Right lobe of liver (tissue), 6 donors: ENCODE measurements at regions of chr16 and their contacts with region 1.

Region 1: DNA sequence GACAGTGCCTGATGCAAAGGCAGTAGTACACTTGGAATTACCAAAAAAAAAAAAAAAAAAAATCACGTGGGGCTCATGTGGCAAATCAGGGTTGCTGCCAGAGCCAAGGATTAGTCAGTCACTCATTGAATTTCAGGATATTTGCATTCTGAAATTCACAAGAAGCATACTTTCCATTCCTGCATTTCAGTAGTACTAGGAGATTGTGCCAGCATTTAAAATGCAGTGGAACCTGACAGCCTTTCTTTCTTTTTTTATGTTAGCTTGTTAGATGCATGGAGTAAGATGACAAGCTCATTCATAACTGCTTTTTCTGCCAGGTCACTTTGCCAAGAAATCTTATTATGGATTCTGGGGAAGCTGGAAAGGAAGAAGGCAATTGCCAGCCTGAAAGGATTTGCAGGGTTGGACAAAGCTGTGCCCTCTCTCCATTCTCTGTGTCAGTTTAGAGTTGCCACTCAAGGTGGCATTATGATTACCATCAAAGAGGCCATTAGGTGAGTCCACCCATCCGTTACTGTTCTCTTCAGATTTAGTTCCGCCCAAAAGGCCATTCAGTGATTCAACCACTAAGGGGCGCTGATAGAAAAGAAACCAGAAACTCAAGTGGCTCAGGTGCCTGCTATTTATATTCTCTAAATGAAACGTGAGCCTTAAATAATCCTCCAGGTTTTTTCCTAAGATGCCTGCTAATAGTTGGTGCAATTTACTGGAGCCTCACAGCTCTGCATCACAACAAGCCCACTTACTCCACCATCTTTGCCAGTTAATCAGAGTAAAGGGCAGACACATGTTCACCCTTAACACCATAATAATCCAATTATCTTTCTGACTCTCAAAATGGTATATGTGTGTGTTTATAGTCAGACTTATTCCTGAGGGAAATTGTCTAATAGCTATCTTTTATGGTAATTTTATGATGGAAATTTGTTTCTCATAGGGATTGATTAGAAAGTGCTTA is 59.0 kb downstream of the TANGO6 start:
- DNase-seq: peak in 1 of 3 donors; percentile 57
- ATAC-seq: peak; percentile 72 to 77 (median 76)
- H3K4me3 ChIP-seq: no peak overlapping the region
- H3K27ac ChIP-seq: peak overlapping the region in 1 of 3 donors; percentile 76
- H3K4me1 ChIP-seq: peaks cover 0 to 42% (median 17%) of the 10 kb centered on the region in 4 donors
- H3K27me3 ChIP-seq: no peaks in the 10 kb centered on the region
- CTCF ChIP-seq: peak; percentile 69 to 82 (median 79)
- POLR2A ChIP-seq: no peak

Region 2: DNA sequence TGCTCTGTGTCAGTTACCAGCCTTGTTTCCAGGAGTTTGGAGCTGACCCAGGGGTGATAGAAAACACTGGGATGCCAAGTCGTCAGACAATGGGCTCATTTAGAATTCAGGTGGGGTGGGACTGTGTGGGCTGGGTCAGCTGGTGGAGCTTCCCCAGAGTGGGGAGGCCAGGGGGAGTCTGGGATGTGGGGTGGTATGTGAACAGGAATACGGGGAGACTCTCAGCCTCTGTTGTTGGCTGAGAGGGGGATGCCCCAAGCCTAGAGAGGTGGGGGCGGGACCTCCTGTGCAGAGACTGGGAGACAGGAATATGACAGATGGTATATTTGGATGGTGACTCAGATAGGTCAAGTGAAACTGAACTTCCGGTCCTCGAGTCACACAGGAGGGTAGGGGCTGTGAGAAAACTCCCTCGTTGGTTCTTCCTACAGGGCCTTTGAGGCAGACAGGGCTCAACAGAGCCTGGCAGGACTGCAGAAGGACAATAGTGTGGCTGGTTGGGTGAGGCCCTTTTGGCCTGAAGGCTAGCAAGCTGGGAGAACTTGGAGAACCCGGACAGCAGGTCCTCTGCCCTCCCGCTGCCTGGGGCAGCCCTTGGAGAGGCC is 141.5 kb before region 1 on chr16:
- intact Hi-C with region 1: no loop called
- DNase-seq: no peak
- ATAC-seq: peak; percentile 21 to 73 (median 36)
- H3K4me3 ChIP-seq: no peak overlapping the region
- H3K27ac ChIP-seq: peak overlapping the region in 1 of 3 donors; percentile 22
- H3K4me1 ChIP-seq: peaks cover 0 to 1% (median 0%) of the 10 kb centered on the region in 4 donors
- H3K27me3 ChIP-seq: no peaks in the 10 kb centered on the region
- CTCF ChIP-seq: no peak
- POLR2A ChIP-seq: no peak

Region 3: GRCh38 chr16:68978271-68978954 is 76.1 kb after region 1 on chr16:
- intact Hi-C with region 1: no loop called
- DNase-seq: no peak
- ATAC-seq: peak in 2 of 4 donors; percentile 54 to 55
- H3K4me3 ChIP-seq: no peak overlapping the region
- H3K27ac ChIP-seq: no peak overlapping the region
- H3K4me1 ChIP-seq: no peaks in the 10 kb centered on the region
- H3K27me3 ChIP-seq: no peaks in the 10 kb centered on the region
- CTCF ChIP-seq: no peak
- POLR2A ChIP-seq: no peak

Region 4: DNA sequence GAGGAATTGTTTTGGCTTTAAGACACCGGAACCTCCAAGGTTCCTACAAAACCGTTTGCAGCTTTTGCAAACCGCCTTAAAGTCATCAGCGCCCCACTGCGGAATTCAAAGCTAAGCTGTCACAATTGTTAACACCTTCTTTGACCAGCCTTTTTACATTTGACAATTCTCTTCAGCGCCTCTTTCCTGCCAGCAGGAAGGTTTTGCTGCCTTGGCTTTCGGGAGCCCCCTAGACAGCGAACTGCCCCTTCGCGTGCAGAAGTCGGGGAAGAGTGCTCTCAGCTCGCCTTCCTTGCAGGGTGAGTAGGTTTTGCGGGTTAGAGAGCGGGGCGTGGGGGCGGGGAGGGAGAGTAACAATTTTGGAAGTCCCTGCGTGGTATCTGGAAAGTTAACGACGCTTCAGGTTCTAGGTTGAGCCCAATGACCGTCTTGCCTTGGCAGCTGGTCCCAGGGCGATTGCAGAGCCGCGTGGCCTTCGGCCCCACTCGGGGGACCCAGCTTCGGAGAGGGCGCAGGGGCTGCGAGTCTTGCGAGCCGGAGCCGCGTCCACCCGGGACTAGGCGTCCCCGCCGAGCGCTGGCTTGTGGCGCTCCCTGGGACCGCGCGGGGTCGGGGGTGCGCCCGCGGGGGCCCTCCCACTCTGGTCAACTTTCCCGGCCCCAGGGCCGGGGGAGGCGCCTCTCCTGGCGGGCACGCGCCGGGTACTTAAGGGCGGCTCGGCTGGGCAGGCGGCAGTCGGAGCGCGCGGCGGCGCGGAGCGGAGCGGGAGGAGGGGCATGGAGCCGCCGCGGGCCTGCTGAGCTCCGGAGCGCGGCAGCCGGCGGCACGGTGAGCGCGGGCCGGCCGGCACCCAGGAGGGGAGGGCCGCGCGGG is 203.4 kb after region 1 on chr16 and contains the start of gene HAS3:
- intact Hi-C with region 1: loop called in 1 of 2 experiments (anchors 10 kb)
- DNase-seq: peak; percentile 75 to 79 (median 76)
- ATAC-seq: peak; percentile 83 to 94 (median 90)
- H3K4me3 ChIP-seq: peak within 1 kb of the TSS; percentile 49 to 60 (median 55)
- H3K27ac ChIP-seq: no peak within 1 kb of the TSS
- H3K4me1 ChIP-seq: peaks cover 0 to 21% (median 6%) of the 10 kb centered on the region in 4 donors
- H3K27me3 ChIP-seq: no peaks in the 10 kb centered on the region
- CTCF ChIP-seq: peak in 2 of 4 donors; percentile 27
- POLR2A ChIP-seq: peak; percentile 62
- total RNA-seq, gene HAS3: 0.39 to 1.0 (median 0.63) TPM

Region 5: DNA sequence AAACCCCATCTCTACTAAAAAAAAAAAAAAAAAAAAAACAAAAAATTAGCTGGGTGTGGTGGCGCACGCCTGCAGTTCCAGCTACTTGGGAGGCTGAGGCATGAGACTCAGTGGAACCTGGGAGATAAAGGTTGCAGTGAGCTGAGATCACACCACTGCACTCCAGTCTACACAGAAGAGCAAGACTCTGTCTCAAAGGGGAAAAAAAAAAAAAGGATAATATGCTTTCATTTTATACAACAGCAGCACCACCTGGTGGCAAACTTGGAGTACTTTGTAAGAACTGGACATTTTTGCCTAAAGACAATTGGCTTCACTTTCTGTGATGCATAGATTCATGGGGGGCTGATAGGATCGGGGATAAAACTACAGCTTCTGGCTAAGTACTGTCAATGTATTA is 221.6 kb after region 1 on chr16:
- intact Hi-C with region 1: loop called in 1 of 2 experiments (anchors 5 kb)
- DNase-seq: no peak
- ATAC-seq: peak; percentile 54 to 68 (median 60)
- H3K4me3 ChIP-seq: no peak overlapping the region
- H3K27ac ChIP-seq: no peak overlapping the region
- H3K4me1 ChIP-seq: peaks cover 0 to 32% (median 8%) of the 10 kb centered on the region in 4 donors
- H3K27me3 ChIP-seq: no peaks in the 10 kb centered on the region
- CTCF ChIP-seq: peak; percentile 62 to 76 (median 66)
- POLR2A ChIP-seq: no peak

Region 6: GRCh38 chr16:69330286-69331109 is 428.2 kb after region 1 on chr16 and contains the start of gene PDF:
- intact Hi-C with region 1: no loop called
- DNase-seq: peak; percentile 97
- ATAC-seq: peak; percentile 86 to 95 (median 88)
- H3K4me3 ChIP-seq: peak within 1 kb of the TSS; percentile 89 to 99 (median 95)
- H3K27ac ChIP-seq: peak within 1 kb of the TSS; percentile 60 to 95 (median 81)
- H3K4me1 ChIP-seq: peaks cover 3 to 41% (median 20%) of the 10 kb centered on the region in 4 donors
- H3K27me3 ChIP-seq: no peaks in the 10 kb centered on the region
- CTCF ChIP-seq: peak in 2 of 4 donors; percentile 19 to 32
- POLR2A ChIP-seq: peak; percentile 88
- total RNA-seq, gene PDF: 13.5 to 38.5 (median 15.7) TPM